Posterior cingulate gyrus (tissue), 11 donors: ENCODE measurements at regions of chr6 and their contacts with region 1.

Region 1: DNA sequence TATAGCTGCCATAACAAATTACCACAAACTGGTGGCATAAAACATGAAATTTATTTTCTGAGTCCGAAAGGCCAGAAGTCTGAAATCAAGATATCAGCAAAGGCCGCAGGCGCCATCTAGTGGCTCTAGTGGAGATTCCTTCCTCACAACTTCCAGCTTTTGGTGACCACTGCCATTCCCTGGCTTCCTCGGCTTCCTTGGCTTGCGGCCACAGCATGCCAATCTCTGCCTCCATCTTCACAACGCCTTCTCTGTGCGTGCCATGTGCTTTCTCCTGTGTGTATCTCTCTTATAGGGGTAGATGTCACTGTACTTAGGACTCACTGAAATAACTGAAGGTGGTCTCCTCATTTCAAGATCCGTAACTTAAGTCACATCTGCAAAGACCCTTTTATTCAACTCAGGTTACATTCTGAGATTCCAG is 5.4 kb upstream of the PLAGL1 start:
- DNase-seq: peak; percentile 31 to 95 (median 70)

Region 2: DNA sequence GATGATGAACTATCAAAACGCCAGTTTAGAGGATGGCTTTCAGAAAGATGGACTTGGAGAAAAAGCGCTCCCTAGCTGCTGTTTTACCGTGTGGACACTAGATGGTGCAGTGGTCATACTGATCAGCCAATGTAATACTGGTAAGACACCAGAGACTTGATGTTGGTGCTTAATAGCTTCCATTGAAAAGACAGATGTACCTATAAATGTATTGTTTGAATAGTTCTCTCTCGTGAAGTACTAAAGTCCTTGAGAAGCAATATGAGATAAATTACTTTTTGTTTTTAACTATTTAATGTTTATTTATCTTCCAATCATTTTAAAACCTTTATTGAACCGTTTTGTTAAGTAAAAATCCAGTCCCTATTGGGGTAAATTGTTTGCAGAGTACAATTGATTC is 438.1 kb before region 1 on chr6:
- intact Hi-C with region 1: loop called (anchors 1 kb)
- DNase-seq: peak in 4 of 10 donors; percentile 27 to 63 (median 43)

Region 3: DNA sequence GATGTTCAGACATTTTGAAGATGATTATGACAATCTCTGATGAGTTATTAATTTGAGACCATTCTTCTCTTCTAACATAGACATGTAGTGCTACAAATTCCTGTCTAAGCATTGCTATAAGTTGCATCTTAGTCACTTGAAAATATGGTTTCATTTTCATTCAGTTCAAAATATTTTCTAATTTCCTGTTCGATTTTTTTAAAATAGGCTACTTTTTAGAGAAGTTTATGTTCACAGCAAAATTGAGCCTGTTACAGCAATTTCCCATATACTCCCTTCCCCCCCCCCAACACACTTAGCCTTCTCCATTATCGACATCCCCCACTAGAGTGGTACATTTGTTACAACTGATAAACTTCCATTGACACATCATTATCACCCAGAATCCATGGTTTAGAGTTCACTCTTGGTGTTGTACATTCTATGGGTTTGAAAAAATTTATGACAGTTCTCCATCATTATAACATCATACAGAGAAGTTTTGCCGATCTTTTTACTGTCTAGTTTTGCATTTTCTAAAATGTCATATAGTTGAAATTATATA is 36.6 kb before region 1 on chr6:
- intact Hi-C with region 1: no loop called
- DNase-seq: no peak

Region 4: GRCh38 chr6:144131248-144131709 is 117.8 kb after region 1 on chr6:
- intact Hi-C with region 1: no loop called
- DNase-seq: no peak

Region 5: GRCh38 chr6:144248476-144249301 is 235.2 kb after region 1 on chr6:
- intact Hi-C with region 1: no loop called
- DNase-seq: no peak